ENCODE measurements at regions of chr14 and their contacts with region 1.

Region 1: GRCh38 chr14:50964595-50965390 is 20.5 kb upstream of the PYGL start:
- DNase-seq: peak; percentile 92
- H3K4me3 ChIP-seq: no peak overlapping the region
- H3K27ac ChIP-seq: peak overlapping the region; percentile 50 to 77 (median 61)
- H3K4me1 ChIP-seq: peaks cover 0 to 47% (median 35%) of the 10 kb centered on the region in 4 donors
- H3K27me3 ChIP-seq: no peaks in the 10 kb centered on the region
- CTCF ChIP-seq: no peak
- EP300 ChIP-seq: peak in 2 of 4 donors; percentile 3 to 51
- POLR2A ChIP-seq: no peak

Region 2: DNA sequence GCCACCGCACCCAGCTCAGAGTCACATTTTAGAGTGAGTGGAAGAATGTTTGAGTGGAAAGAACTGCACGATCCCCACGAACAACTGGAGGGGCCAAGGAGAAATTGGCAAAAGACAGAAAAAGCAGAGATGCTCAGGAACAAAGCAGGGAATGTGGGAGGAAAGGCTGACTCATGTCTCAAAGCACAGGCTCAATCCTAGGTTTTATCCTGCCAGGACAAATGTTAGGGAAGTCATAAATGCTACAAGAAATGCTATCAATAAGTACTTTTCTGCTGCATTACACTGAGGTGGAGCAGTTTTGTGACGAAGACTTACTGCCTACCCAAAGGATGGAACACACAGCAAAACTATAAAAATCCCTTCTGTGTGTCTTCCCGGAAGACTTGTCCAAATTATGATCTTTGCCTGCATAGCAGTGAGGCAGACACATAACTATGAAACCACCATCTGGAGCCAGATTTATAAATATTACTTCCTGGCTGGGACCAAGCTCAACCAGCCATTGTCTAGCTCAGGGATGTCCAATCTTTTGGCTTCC is 160.5 kb before region 1 on chr14:
- intact Hi-C with region 1: no loop called
- DNase-seq: no peak
- H3K4me3 ChIP-seq: no peak overlapping the region
- H3K27ac ChIP-seq: peak overlapping the region; percentile 31 to 71 (median 56)
- H3K4me1 ChIP-seq: peaks cover 0 to 29% (median 11%) of the 10 kb centered on the region in 4 donors
- H3K27me3 ChIP-seq: no peaks in the 10 kb centered on the region
- CTCF ChIP-seq: no peak
- EP300 ChIP-seq: no peak
- POLR2A ChIP-seq: no peak

Region 3: DNA sequence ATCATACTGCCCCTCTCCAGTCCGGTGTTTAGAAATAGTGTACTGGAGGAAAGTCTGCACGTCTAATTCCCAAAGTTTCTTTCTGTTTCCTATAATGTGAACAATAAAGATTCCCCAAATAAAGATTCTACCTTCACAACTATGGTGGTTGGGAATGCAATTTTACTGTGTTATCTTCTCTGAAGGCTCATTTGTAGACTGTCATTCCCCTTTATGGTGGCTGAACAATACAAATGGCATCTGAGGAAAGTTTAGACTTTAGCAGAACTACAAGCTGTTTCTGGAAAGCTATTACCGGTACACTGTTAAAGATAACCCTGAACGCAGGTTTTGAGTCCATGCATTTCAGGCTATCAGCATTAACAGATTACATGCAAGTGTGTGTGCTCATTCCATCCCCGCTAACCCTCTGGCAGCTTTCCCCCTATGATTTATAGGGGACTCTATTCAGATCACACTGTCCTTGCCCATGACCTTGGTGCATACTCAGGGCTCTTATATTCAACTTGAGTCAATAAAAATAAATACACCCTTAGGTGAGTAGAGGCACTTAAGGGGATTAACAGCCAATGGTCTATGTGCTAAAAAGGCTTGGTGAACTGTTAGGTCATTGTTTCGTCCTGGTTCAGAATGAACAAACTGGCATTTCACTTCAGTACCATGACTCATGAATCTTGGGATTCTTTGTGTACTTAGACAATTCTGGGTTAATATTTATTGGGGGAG is 40.2 kb after region 1 on chr14:
- intact Hi-C with region 1: loop called (anchors 5 kb)
- DNase-seq: no peak
- H3K4me3 ChIP-seq: no peak overlapping the region
- H3K27ac ChIP-seq: peak overlapping the region in 3 of 4 donors; percentile 69 to 79 (median 75)
- H3K4me1 ChIP-seq: peaks cover 0 to 55% (median 35%) of the 10 kb centered on the region in 4 donors
- H3K27me3 ChIP-seq: no peaks in the 10 kb centered on the region
- CTCF ChIP-seq: no peak
- EP300 ChIP-seq: no peak
- POLR2A ChIP-seq: no peak